Heart left ventricle (tissue), 16 donors: ENCODE measurements at regions of chr5 and their contacts with region 1.

Region 1: GRCh38 chr5:132190161-132190817 is 37.4 kb downstream of the P4HA2 start:
- DNase-seq: no peak
- ATAC-seq: peak; percentile 90 to 95 (median 94)
- H3K4me3 ChIP-seq: no peak overlapping the region
- H3K27ac ChIP-seq: no peak overlapping the region
- H3K4me1 ChIP-seq: peaks cover 0 to 15% (median 0%) of the 10 kb centered on the region in 12 donors
- H3K27me3 ChIP-seq: no peaks in the 10 kb centered on the region
- CTCF ChIP-seq: peak; percentile 63 to 87 (median 75)
- POLR2A ChIP-seq: no peak

Region 2: DNA sequence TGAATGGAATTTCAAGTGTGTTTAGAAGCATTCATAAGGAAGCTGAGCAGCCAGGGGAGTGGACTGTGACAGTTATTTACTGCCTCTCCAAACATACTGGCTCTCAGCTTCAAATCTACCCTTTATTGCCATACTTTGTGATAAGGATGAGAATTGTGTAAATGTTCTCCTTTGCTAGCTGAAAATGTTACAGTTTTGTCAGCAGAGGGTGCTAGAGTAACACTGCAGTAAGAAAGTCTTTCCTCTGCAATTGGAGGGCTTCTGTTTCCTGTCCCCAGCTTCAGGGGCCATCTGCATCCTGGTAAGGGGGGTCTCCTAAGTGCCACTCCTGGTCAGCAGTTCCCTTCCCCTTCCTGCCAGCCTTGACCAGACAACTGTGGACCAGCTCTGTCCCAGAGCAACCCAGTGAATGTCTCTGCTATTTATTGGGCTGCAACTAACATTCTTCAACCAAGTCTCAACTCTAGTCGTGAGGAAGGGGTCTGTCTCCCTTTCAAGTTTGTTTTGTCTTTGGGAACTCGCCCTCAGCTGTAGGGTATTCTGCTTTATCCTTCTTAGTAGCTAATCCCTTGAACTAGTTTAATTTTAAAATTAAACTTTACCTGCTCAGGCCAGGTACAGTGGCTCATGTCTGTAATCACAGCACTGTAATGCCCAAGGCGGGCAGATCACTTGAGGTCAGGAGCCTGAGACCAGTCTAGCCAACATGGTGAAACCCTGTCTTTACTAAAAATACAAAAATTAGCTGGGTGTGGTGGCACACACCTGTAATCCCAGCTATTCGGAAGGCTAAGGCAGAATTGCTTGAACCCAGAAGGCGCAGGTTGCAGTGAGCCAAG is 600.6 kb before region 1 on chr5:
- intact Hi-C with region 1: loop called in 1 of 10 experiments (anchors 5 kb)
- DNase-seq: peak in 1 of 5 donors; percentile 25
- ATAC-seq: peak in 3 of 4 donors; percentile 63 to 68 (median 68)
- H3K4me3 ChIP-seq: no peak overlapping the region
- H3K27ac ChIP-seq: no peak overlapping the region
- H3K4me1 ChIP-seq: peaks cover 0 to 21% (median 17%) of the 10 kb centered on the region in 12 donors
- H3K27me3 ChIP-seq: no peaks in the 10 kb centered on the region
- CTCF ChIP-seq: peak; percentile 72 to 95 (median 85)
- POLR2A ChIP-seq: no peak

Region 3: GRCh38 chr5:132227485-132228240 is 37.4 kb after region 1 on chr5 and contains the start of gene P4HA2:
- intact Hi-C with region 1: loop called in 4 of 10 experiments (anchors 2 to 10 kb)
- DNase-seq: peak; percentile 84 to 91 (median 89)
- ATAC-seq: peak; percentile 63 to 89 (median 82)
- H3K4me3 ChIP-seq: peak within 1 kb of the TSS; percentile 67 to 98 (median 86)
- H3K27ac ChIP-seq: peak within 1 kb of the TSS; percentile 84 to 98 (median 94)
- H3K4me1 ChIP-seq: peaks cover 10 to 59% (median 47%) of the 10 kb centered on the region in 12 donors
- H3K27me3 ChIP-seq: peaks cover 0 to 8% (median 0%) of the 10 kb centered on the region in 9 donors
- CTCF ChIP-seq: peak in 5 of 12 donors; percentile 18 to 37 (median 30)
- POLR2A ChIP-seq: peak in 1 of 2 donors; percentile 71
- total RNA-seq, gene P4HA2: 41.2 to 80.7 (median 55.7) TPM

Region 4: DNA sequence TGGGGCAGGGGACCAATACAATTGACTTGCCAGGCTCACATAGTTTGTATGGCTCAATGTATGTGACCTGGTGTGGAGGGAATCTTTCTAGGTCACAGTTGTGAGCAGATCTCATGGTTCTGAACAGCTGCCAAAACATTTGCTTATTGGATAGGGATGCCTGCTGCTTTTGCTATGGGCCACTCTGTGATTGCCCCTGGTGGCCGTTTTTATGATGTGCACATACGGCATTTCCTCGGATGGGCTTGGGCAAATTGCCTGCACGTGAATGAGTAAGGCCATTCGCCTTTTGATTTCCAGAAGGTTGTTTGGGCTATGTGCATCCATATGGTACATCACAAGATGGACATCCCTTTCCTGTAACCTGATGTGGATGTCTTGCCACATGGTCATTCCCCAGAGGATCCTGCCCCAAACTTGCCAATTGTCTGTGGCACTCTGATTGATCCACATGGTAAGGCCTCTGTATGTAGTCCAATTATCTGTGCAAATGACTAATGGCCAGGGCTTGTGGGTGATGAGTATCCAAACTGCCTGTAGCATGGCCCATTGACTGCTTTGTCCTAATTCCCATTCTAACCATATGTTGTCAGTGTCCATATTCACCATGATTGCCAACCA is 93.2 kb after region 1 on chr5:
- intact Hi-C with region 1: loop called in 2 of 10 experiments (anchors 5 to 10 kb)
- DNase-seq: no peak
- ATAC-seq: peak in 3 of 4 donors; percentile 69 to 79 (median 70)
- H3K4me3 ChIP-seq: no peak overlapping the region
- H3K27ac ChIP-seq: no peak overlapping the region
- H3K4me1 ChIP-seq: peaks cover 0 to 3% (median 0%) of the 10 kb centered on the region in 12 donors
- H3K27me3 ChIP-seq: no peaks in the 10 kb centered on the region
- CTCF ChIP-seq: peak; percentile 40 to 72 (median 57)
- POLR2A ChIP-seq: no peak